Activated CD4-positive, alpha-beta memory T cell treated with anti-CD3 and anti-CD28 coated beads for 36 hours (primary cell): ENCODE measurements at regions of chr2 and their contacts with region 1.

Region 1: DNA sequence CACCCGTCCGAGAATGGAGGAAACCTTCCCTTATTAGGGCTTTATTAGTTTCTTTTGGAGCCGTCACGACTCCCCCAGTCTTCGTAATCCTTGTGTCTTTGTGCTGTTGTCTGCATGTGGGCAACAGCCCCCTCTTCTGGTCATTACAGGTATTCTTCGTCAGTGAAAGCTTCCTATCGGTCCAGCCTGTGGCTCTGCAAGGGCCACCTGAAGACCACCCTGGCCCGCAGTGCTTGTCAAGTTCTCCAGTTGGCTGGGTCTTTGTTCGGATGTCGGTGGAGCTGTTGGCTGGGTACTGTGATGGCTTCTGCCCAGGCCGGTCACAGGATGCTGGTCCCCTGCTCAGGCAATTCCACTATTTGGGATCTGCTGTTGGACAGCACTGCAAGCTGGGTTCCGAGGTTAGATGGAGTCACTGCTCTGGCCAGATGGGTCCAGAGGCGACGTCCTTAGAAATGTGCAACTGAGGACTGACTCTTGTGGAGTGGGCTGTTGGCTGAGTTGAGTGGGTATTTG is 19.2 kb downstream of the E2F6 start:
- DNase-seq: peak; percentile 50
- H3K4me3 Mint-ChIP-seq: no peak overlapping the region
- H3K27ac Mint-ChIP-seq: no peak overlapping the region
- H3K4me1 Mint-ChIP-seq: no peaks in the 10 kb centered on the region
- H3K27me3 Mint-ChIP-seq: no peaks in the 10 kb centered on the region

Region 2: DNA sequence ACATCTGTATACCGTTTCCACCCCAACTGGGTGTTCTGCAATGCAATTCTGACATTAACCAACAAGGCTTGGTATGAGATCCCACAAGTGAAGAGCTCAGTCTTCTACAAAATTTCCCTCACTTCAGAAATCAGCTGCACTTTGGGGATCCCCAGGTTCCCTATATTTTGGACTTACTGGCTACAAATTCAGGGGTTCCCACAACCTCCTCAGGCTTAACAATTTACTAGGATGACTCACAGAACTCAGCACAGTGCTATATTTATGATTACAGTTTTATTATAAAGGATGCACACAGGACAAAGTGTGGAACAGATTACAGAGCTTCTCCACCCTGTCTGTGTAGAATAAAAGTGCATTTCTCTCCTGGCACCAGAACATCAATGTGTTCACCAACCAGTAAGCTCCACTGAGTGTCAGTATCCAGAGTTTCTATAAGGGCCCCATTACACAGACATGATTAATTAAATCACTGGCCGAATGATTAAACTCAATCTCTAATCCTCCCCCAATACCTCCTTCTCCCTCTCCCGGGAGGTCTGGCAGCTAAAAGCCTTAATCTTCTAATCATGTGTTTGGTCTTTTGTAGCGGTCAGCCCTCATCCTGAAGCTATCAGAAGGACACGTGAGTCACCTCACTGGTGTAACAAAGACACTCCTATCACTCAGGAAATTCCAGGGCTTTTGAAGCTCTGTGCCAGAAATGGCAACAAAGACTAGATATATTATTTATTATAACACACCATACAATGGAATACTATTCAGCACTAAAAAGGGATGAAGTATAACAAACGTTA is 206.9 kb before region 1 on chr2:
- CTCF ChIA-PET with region 1: no interaction called
- POLR2A ChIA-PET with region 1: no interaction called
- intact Hi-C with region 1: loop called (anchors 5 kb)
- DNase-seq: no peak
- H3K4me3 Mint-ChIP-seq: no peak overlapping the region
- H3K27ac Mint-ChIP-seq: no peak overlapping the region
- H3K4me1 Mint-ChIP-seq: peaks cover 12% of the 10 kb centered on the region
- H3K27me3 Mint-ChIP-seq: no peaks in the 10 kb centered on the region

Region 3: DNA sequence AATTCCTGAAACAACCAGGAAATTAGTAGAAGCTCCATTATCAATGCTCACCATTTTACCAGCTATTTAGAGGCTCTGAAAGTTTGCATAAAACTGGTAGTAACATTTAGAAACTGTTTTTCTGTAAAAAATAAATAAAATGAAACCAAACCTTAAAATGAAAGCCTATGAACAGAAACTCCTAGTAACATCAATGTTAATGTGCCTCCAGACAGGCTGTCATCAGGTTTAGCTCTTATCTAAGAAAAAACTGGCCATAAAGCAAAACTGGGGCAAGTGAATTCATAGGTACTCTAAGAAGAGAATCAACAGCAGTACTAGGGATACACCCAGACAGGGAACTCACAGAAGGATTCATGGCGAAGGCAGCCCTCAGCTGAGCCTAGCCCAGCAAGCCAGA is 11.1 kb after region 1 on chr2:
- CTCF ChIA-PET with region 1: interaction called, 12 read pairs
- POLR2A ChIA-PET with region 1: no interaction called
- intact Hi-C with region 1: no loop called
- DNase-seq: no peak
- H3K4me3 Mint-ChIP-seq: no peak overlapping the region
- H3K27ac Mint-ChIP-seq: no peak overlapping the region
- H3K4me1 Mint-ChIP-seq: peaks cover 31% of the 10 kb centered on the region
- H3K27me3 Mint-ChIP-seq: no peaks in the 10 kb centered on the region